Activated CD4-positive, alpha-beta memory T cell treated with anti-CD3 and anti-CD28 coated beads, Interleukin-2, amount 10 ng/mL, durations not matched to agents 7 days and 5 days (primary cell): ENCODE measurements at regions of chr20 and their contacts with region 1.

Region 1: GRCh38 chr20:43955062-43955749 is 40.6 kb downstream of the TOX2 start:
- DNase-seq: peak; percentile 57
- H3K4me3 Mint-ChIP-seq: peak overlapping the region; percentile 2
- H3K27ac Mint-ChIP-seq: peak overlapping the region; percentile 66
- H3K4me1 Mint-ChIP-seq: peaks cover 79% of the 10 kb centered on the region
- H3K27me3 Mint-ChIP-seq: peaks cover 59% of the 10 kb centered on the region

Region 2: DNA sequence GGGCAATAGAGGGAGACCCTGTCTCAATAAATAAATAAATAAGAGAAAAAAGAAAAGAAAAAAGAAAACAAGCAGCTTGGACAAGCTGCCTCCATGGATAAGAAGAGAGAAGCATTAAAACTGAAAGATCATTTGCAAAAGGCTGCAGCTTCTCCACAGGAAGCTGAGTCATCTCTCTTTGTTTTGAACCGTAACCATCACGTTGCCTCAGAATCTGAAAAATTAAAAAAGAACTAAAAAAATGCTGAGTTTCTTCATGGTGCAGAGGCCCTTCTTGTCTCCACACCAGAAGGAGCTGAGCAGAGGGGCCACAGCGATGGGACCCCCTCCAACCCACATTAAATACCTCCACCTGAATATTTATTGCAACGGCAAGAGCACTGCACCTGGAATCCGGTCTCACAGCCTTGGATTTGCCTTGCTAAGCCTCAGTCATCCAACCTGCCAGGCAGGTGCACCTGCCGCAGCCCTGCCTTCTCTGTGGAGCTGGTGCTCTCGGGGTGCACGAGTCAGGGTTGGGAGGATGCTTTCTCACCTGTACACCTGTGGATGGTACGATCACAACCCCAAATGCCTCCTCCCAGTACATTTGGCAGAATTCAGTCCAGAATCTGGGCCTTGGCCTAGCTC is 12.4 kb before region 1 on chr20:
- CTCF ChIA-PET with region 1: interaction called, 4 read pairs
- POLR2A ChIA-PET with region 1: interaction called, 37 read pairs
- DNase-seq: peak; percentile 28
- H3K4me3 Mint-ChIP-seq: peak overlapping the region; percentile 34
- H3K27ac Mint-ChIP-seq: peak overlapping the region; percentile 85
- H3K4me1 Mint-ChIP-seq: peaks cover 63% of the 10 kb centered on the region
- H3K27me3 Mint-ChIP-seq: peaks cover 55% of the 10 kb centered on the region

Region 3: DNA sequence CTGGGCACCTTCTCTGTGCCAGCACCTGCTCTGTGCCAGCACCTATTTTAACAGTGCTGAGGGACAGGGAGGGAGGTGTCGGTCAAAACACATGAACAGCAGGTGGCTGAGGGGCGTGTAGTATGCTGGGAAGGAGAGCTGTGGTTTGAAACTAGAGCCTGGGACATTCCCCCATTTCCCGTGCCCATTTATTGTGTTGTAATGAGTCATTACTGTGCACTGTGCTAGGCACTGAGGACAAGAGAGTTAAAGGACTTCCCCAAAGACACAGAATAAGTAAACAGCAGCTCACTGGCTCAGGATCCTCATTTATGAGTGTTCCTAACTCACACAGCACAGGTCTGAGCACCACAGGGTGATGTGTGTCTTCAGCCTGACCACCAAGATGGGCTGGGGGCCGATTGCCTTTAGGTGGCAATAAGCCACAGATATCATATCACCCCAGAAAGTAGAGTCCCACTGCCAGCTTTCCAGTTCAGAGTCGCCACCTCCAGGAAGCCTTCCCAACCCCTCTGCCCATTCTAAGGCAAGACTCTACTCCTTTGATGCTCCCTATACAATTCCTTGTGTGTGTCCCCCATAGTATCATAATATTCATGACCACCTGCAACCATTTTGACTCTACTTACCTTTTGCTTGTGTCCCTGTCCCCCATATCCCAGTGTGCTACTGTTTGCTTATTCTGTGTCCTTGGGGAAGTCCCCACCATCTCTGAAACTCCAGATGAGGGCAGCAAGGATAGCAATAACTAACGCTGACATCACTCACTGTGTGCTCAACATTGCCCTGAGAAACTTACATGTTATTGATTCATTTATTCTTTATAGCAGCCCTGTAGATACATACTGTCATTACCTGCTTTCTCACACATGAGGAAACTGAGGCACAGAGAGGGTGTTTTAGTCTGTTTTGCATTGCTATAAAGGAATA is 46.7 kb after region 1 on chr20:
- CTCF ChIA-PET with region 1: no interaction called
- POLR2A ChIA-PET with region 1: no interaction called
- DNase-seq: no peak
- H3K4me3 Mint-ChIP-seq: no peak overlapping the region
- H3K27ac Mint-ChIP-seq: no peak overlapping the region
- H3K4me1 Mint-ChIP-seq: peaks cover 9% of the 10 kb centered on the region
- H3K27me3 Mint-ChIP-seq: peaks cover 62% of the 10 kb centered on the region